ENCODE measurements at regions of chr1 and their contacts with region 1.

Region 1: GRCh38 chr1:11059990-11060830 is at the start of gene SRM:
- DNase-seq: peak; percentile 76 to 96 (median 89)
- ATAC-seq: peak; percentile 96
- H3K4me3 ChIP-seq: peak within 1 kb of the TSS; percentile 76
- H3K4me3 Mint-ChIP-seq: peak within 1 kb of the TSS; percentile 96
- H3K27ac ChIP-seq: peak within 1 kb of the TSS; percentile 25 to 57
- H3K27ac Mint-ChIP-seq: peak within 1 kb of the TSS; percentile 77
- H3K4me1 ChIP-seq: peaks cover 32% of the 10 kb centered on the region
- H3K4me1 Mint-ChIP-seq: peaks cover 39% of the 10 kb centered on the region
- H3K27me3 ChIP-seq: no peaks in the 10 kb centered on the region
- H3K27me3 Mint-ChIP-seq: no peaks in the 10 kb centered on the region
- CTCF ChIP-seq: no peak
- total RNA-seq, gene SRM: 21.2 to 24.8 TPM

Region 2: DNA sequence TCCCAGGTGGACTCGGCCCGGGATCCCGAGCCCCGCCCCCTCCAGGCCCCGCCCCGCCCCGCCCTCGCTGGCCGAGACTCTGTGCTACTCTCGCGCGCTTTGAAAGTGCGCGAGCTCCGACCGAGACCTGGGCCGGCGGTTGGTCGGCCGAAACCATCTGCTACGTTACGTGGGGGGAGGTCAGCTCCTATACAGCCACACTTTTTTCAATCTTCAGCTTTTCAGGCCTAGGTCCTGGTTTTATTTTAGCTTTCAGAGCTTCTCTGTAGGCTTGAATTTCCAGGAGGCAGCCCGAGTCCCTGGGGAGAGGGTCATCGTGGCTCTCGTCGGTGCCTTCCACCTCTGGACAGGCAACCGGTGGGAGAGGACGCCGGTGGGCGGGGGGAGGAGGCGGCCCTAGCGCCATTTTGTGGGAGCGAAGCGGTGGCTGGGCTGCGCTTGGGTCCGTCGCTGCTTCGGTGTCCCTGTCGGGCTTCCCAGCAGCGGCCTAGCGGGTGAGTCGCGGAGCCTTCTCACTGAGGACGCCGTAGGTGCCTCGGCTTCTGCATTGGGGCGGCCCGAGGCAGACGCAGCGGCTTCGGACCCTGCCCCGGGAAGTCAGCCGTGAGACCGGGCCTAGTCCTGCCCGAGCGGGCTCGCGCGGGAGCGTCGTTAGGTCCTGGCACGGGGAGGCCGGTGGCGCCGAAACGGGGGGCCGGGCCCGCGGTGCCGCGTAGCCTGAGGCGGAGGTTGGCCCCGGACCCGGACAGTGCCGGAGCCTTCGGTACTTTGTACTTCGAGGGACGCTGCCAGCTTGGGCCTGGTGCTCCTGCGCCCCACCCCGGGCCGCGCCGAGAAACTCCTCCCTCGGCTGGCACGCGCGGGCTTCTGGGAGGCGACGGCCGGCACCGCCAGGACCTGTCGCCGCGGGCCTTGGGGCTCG is 47.7 kb before region 1 on chr1 and contains the start of gene TARDBP:
- CTCF ChIA-PET with region 1: no interaction called
- POLR2A ChIA-PET with region 1: interaction called, 14 read pairs
- intact Hi-C with region 1: loop called in 1 of 2 experiments (anchors 2 kb)
- DNase-seq: peak; percentile 80 to 95 (median 88)
- ATAC-seq: peak; percentile 85
- H3K4me3 ChIP-seq: peak within 1 kb of the TSS; percentile 85
- H3K4me3 Mint-ChIP-seq: peak within 1 kb of the TSS; percentile 94
- H3K27ac ChIP-seq: peak within 1 kb of the TSS; percentile 91 to 99
- H3K27ac Mint-ChIP-seq: peak within 1 kb of the TSS; percentile 98
- H3K4me1 ChIP-seq: peaks cover 44% of the 10 kb centered on the region
- H3K4me1 Mint-ChIP-seq: peaks cover 34% of the 10 kb centered on the region
- H3K27me3 ChIP-seq: no peaks in the 10 kb centered on the region
- H3K27me3 Mint-ChIP-seq: no peaks in the 10 kb centered on the region
- CTCF ChIP-seq: no peak
- total RNA-seq, gene TARDBP: 141 to 149 TPM